RWPE1 (cell line): ENCODE measurements at regions of chr12 and their contacts with region 1.

Region 1: GRCh38 chr12:5965950-5966383 is 20.9 kb upstream of the ANO2 start:
- DNase-seq: peak; percentile 45
- H3K27ac ChIP-seq: no peak overlapping the region
- CTCF ChIP-seq: peak; percentile 60

Region 2: GRCh38 chr12:5982106-5982505 is 16.1 kb after region 1 on chr12:
- CTCF ChIA-PET with region 1: no interaction called
- POLR2A ChIA-PET with region 1: no interaction called
- DNase-seq: no peak
- H3K27ac ChIP-seq: no peak overlapping the region
- CTCF ChIP-seq: no peak

Region 3: DNA sequence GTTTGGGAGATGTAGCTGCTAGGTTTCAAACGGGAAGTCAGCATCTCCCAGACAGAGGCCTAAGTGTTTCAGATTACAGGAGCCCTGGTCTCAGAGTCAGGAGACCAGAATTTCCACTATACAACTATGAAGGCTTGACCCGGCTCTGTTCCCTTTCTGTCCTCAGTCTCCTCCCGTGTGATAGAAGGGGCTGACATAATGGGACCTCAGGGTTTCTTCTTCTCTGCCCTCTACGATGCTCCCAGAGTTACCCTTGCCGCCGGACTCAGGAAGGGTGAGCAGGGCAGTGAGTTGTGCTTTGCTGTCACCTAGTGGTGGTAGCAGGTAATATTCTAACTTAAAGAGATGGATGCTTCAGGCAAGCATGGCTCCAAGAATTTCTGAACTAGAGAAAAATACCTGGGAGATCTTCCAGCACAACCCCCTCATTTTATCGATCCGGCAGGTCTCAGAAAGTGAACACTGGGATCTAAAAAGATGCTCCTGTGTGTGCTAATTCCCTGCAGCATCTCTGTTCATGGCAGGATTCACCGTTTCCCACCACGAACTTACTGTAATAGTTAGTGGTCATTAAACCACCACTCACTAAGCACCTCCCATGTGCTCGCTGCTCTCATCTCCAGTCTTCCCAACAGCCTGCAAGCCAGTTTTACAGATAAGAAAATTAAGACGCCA is 74.1 kb after region 1 on chr12:
- CTCF ChIA-PET with region 1: interaction called, 11 read pairs
- POLR2A ChIA-PET with region 1: no interaction called
- DNase-seq: peak; percentile 63
- H3K27ac ChIP-seq: no peak overlapping the region
- CTCF ChIP-seq: peak; percentile 71